IMR-90 (cell line): ENCODE measurements at regions of chr7 and their contacts with region 1.

Region 1: DNA sequence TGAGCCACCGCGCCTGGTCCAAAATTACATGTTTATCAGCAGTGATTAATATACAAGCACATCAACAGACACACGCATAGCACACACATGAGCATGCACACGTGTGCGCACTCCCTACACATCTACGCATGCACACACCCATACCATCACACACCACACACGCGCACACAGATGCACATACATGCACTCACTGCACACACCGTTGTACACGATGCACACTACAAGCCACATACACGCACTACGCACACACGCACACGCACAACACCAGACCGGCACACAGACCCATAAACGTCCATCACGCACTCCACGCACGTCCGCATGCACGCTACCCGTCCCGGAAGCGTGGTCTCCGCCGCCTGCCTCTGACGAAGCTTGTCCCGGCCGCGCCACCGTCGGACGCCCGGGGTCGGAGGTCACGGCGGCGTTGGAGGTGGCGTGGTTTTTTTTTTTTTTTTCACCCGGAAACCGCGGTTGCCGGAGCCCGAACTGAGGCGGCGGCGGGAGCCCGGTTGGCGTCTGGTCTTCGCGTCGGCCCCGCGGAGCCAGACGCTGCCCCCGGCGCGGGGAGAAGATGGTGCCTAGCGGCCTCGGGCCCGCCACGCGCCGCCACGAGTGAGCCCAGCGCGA is at the start of gene TMEM248:
- DNase-seq: peak; percentile 77
- ATAC-seq: peak; percentile 96
- H3K4me3 ChIP-seq: peak within 1 kb of the TSS; percentile 50
- H3K27ac ChIP-seq: peak within 1 kb of the TSS; percentile 81
- H3K4me1 ChIP-seq: no peaks in the 10 kb centered on the region
- H3K27me3 ChIP-seq: no peaks in the 10 kb centered on the region
- CTCF ChIP-seq: no peak
- POLR2A ChIP-seq: peak; percentile 75
- RAD21 ChIP-seq: no peak
- total RNA-seq, gene TMEM248: 103 and 117 TPM in 2 replicates

Region 2: DNA sequence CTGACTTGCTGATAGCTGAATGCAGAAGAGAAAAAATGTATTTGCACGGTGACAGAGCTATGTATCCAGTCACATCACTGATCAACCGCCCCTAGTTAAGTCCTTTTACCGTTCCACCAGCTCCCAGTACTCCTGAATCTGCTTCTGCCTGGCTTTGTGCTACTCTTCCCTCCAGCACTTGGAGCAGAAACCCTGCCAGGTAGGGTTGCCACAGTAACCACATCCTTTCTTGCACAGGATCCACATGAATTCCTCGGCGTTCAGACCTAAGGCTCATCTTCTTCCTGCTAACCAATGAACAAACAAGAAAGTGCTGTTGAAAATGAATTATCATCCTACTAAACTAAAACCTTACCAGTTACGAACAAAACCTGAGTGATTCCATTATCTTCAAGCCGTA is 344.2 kb before region 1 on chr7:
- CTCF ChIA-PET with region 1: no interaction called
- POLR2A ChIA-PET with region 1: no interaction called
- dilution Hi-C with region 1: no loop called
- in situ Hi-C with region 1: no loop called
- intact Hi-C with region 1: no loop called
- DNase-seq: no peak
- ATAC-seq: no peak
- H3K4me3 ChIP-seq: no peak overlapping the region
- H3K27ac ChIP-seq: no peak overlapping the region
- H3K4me1 ChIP-seq: peaks cover 4% of the 10 kb centered on the region
- H3K27me3 ChIP-seq: no peaks in the 10 kb centered on the region
- CTCF ChIP-seq: no peak
- POLR2A ChIP-seq: no peak
- RAD21 ChIP-seq: no peak

Region 3: GRCh38 chr7:66974986-66975590 is 54.2 kb after region 1 on chr7:
- CTCF ChIA-PET with region 1: no interaction called
- POLR2A ChIA-PET with region 1: no interaction called
- dilution Hi-C with region 1: no loop called
- in situ Hi-C with region 1: no loop called
- intact Hi-C with region 1: loop called (anchors 10 kb)
- DNase-seq: no peak
- ATAC-seq: no peak
- H3K4me3 ChIP-seq: no peak overlapping the region
- H3K27ac ChIP-seq: no peak overlapping the region
- H3K4me1 ChIP-seq: peaks cover 2% of the 10 kb centered on the region; the same call in 1 of the 2 replicates
- H3K27me3 ChIP-seq: no peaks in the 10 kb centered on the region
- CTCF ChIP-seq: no peak
- POLR2A ChIP-seq: no peak
- RAD21 ChIP-seq: no peak